Activated naive CD4-positive, alpha-beta T cell treated with anti-CD3 and anti-CD28 coated beads, Interleukin-2, amount 10 ng/mL, durations not matched to agents 7 days and 5 days (primary cell): ENCODE measurements at regions of chr12 and their contacts with region 1.

Region 1: GRCh38 chr12:68317047-68317667 is 15.0 kb downstream of the MDM1 start:
- DNase-seq: peak; percentile 64
- H3K4me3 Mint-ChIP-seq: no peak overlapping the region
- H3K27ac Mint-ChIP-seq: no peak overlapping the region
- H3K4me1 Mint-ChIP-seq: no peaks in the 10 kb centered on the region
- H3K27me3 Mint-ChIP-seq: no peaks in the 10 kb centered on the region

Region 2: GRCh38 chr12:68040450-68041075 is 276.6 kb before region 1 on chr12:
- CTCF ChIA-PET with region 1: interaction called, 22 read pairs
- DNase-seq: peak; percentile 74
- H3K4me3 Mint-ChIP-seq: no peak overlapping the region
- H3K27ac Mint-ChIP-seq: no peak overlapping the region
- H3K4me1 Mint-ChIP-seq: peaks cover 21% of the 10 kb centered on the region
- H3K27me3 Mint-ChIP-seq: no peaks in the 10 kb centered on the region

Region 3: DNA sequence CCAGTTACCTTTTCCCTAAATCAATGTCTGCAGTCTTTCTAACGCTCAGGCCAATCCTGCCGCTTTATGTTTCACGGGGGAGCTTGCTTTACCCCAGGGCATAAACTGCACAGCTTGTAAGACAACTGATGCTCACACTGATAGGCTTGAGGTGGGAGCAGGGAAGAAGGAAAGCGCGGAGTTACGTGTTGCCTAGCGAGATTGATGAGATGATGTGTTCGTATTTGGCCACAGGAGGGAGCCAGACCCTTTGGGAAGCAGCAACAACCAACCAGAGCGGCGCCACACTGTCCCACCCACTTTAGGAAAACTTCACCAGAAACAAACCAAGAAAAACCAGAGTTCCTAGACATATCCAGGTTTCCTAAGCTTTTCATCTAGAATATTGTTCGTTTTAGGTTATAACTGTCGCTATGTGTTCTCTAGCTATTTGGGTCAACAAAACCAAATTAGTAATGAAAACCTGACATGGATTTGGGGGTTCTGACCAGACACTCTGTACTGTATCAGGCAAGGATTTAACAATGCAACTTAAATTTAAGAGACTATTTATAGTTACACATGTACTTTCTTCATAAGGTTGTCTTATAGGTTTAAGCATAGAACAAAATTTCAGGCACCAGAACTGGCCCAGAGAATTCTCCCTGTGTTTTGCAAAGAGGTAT is 93.9 kb before region 1 on chr12:
- CTCF ChIA-PET with region 1: interaction called, 99 read pairs
- DNase-seq: peak; percentile 81
- H3K4me3 Mint-ChIP-seq: no peak overlapping the region
- H3K27ac Mint-ChIP-seq: no peak overlapping the region
- H3K4me1 Mint-ChIP-seq: peaks cover 10% of the 10 kb centered on the region
- H3K27me3 Mint-ChIP-seq: peaks cover 5% of the 10 kb centered on the region

Region 4: DNA sequence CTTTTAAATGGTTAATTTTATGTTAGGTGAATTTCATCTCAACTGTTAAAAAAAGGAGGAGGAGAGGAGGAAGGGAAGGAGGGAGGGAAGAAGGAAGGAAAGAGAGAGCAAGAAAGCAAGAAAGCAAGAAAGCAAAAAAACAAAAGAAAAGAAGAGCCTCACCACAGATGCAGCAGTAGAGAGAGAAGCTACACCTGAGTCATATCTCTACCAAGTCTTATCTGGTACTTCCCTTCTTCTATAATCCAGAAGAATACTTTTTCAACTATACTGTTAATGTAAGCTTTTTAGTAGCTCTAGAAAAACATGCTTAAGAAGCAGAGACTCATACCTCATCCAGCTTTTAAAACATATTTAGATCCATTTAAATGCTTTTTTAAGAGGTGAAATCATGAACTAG is 85.9 kb before region 1 on chr12:
- CTCF ChIA-PET with region 1: interaction called, 99 read pairs
- DNase-seq: no peak
- H3K4me3 Mint-ChIP-seq: no peak overlapping the region
- H3K27ac Mint-ChIP-seq: no peak overlapping the region
- H3K4me1 Mint-ChIP-seq: peaks cover 24% of the 10 kb centered on the region
- H3K27me3 Mint-ChIP-seq: peaks cover 5% of the 10 kb centered on the region

Region 5: DNA sequence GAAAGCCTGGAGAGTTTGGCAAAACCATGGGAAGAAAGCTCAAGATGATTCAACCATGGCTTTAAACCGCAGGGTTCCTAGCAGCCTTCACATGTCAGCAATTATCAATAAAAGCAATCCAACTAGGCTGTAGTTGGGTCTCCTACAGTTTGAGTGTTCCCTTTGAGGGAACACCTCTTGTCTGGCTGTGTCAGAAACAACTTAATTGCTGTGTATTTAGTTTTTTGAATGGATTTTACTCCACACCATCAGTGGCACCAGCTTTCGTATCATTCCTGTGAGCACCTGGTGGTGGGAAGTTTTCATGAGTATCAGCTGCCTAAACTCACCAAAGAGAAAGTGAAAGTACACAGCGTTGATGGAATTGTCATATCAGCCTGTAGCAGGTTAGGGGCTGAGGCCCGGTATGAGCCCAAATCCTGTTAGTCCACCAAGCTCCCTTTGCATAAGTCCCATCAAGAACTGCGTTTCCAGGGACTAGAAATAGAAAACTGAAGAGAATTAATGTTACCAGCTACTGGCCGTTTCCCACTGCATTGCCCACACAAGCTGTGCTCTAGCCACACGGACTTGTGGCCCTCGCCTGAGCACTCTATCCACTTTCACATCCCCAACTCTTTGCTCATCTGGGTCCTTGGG is 80.6 kb before region 1 on chr12:
- CTCF ChIA-PET with region 1: interaction called, 20 read pairs
- DNase-seq: peak; percentile 62
- H3K4me3 Mint-ChIP-seq: peak overlapping the region; percentile 73
- H3K27ac Mint-ChIP-seq: peak overlapping the region; percentile 87
- H3K4me1 Mint-ChIP-seq: peaks cover 58% of the 10 kb centered on the region
- H3K27me3 Mint-ChIP-seq: no peaks in the 10 kb centered on the region